ENCODE measurements at regions of chrX and their contacts with region 1.

Region 1: DNA sequence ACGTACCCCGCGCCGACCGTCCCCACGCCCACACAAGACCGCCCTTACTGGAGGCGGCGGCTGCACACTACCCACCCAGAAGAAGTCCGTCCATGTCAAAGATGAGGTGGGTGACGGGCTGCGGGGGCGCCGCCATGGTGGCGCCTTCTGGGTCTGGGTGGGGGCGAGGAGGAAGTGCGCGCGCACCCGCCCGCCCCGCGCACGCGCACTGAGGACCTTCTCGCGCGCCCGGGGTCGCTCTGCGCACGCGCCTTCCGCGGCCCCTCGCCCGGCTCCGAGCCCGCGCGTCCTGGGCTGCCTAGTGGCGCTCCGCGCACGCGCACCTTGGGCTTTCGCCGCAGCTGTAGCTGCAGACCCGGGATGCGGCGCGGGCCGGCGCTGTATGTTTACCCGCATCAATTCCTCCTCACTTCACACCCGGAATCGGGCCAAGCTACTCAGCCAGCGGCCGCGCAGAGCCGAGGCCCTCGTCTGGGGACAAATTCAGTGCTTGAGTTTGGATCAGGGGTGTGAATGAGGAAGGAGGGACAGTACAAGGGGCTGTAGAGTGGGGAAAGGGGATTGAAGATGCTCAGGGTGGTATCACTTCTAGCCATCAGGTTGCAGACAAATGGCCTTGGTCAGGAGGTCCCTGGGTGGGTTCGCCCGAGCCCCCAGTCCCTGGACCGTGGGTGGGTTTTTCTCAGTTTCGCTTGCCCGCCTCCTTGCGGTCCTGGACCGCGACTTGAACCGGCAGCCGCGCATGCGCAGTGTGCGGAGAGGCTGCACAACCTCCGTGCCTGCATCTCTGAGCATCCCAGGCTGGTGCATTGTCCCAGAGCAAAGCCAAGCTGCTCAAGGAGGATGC is at the start of gene PUDP:
- DNase-seq: peak; percentile 89
- ATAC-seq: peak; percentile 89
- H3K4me3 Mint-ChIP-seq: peak within 1 kb of the TSS; percentile 79
- H3K27ac Mint-ChIP-seq: peak within 1 kb of the TSS; percentile 86
- H3K4me1 Mint-ChIP-seq: peaks cover 17% of the 10 kb centered on the region
- H3K27me3 Mint-ChIP-seq: no peaks in the 10 kb centered on the region
- total RNA-seq, gene PUDP: 15.3 to 18.1 TPM

Region 2: GRCh38 chrX:6708046-6708445 is 440.2 kb before region 1 on chrX:
- CTCF ChIA-PET with region 1: no interaction called
- POLR2A ChIA-PET with region 1: no interaction called
- intact Hi-C with region 1: no loop called
- DNase-seq: no peak
- ATAC-seq: no peak
- H3K4me3 Mint-ChIP-seq: no peak overlapping the region
- H3K27ac Mint-ChIP-seq: no peak overlapping the region
- H3K4me1 Mint-ChIP-seq: no peaks in the 10 kb centered on the region
- H3K27me3 Mint-ChIP-seq: no peaks in the 10 kb centered on the region

Region 3: GRCh38 chrX:7083468-7084396 is 64.5 kb before region 1 on chrX:
- CTCF ChIA-PET with region 1: no interaction called
- POLR2A ChIA-PET with region 1: no interaction called
- intact Hi-C with region 1: loop called in 1 of 2 experiments (anchors 1 kb)
- DNase-seq: peak; percentile 74
- ATAC-seq: peak; percentile 94
- H3K4me3 Mint-ChIP-seq: no peak overlapping the region
- H3K27ac Mint-ChIP-seq: peak overlapping the region; percentile 60
- H3K4me1 Mint-ChIP-seq: peaks cover 44% of the 10 kb centered on the region
- H3K27me3 Mint-ChIP-seq: peaks cover 6% of the 10 kb centered on the region

Region 4: DNA sequence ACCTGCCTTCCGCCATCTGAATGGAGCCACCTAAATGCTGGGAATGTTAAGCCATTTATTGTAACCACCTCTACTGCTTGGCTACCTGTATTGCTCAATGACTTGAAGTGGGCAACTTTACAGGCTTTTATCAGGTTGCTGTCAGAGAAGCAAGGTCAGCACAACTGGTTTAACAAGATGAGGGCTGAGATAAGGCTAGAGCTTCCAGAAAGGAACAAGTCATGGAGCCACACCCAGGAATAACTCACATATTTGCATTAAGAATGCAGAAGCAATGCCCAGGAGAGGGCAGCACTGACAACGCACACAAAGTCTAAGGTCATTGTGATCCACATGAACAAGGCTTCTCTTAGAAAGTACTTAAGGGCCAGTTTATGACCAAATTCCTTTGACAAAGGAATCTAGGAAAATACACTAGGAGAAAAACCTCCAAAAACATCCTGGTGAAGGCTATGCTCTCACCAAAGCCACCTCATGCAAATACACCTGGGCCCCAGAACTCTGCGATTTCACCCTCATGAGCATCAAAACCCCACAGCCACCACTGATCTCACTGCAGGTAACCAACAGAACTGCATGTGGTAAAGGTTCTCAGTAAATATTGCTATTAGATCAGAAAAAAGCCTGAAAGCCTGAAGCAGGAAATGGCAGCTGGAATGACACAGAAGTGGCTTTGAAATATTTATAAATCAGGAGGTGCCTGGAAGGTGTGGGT is 15.7 kb before region 1 on chrX:
- CTCF ChIA-PET with region 1: interaction called, 9 read pairs
- POLR2A ChIA-PET with region 1: no interaction called
- intact Hi-C with region 1: loop called in 1 of 2 experiments (anchors 1 kb)
- DNase-seq: peak; percentile 53
- ATAC-seq: no peak
- H3K4me3 Mint-ChIP-seq: no peak overlapping the region
- H3K27ac Mint-ChIP-seq: peak overlapping the region; percentile 47
- H3K4me1 Mint-ChIP-seq: peaks cover 27% of the 10 kb centered on the region
- H3K27me3 Mint-ChIP-seq: no peaks in the 10 kb centered on the region

Region 5: GRCh38 chrX:7925867-7926472 is 777.8 kb after region 1 on chrX:
- CTCF ChIA-PET with region 1: no interaction called
- POLR2A ChIA-PET with region 1: no interaction called
- intact Hi-C with region 1: loop called (anchors 1 to 5 kb)
- DNase-seq: peak; percentile 71
- ATAC-seq: peak; percentile 40
- H3K4me3 Mint-ChIP-seq: peak overlapping the region; percentile 80
- H3K27ac Mint-ChIP-seq: peak overlapping the region; percentile 42
- H3K4me1 Mint-ChIP-seq: peaks cover 13% of the 10 kb centered on the region
- H3K27me3 Mint-ChIP-seq: no peaks in the 10 kb centered on the region